A549 (cell line): ENCODE measurements at regions of chr4 and their contacts with region 1.

Region 1: DNA sequence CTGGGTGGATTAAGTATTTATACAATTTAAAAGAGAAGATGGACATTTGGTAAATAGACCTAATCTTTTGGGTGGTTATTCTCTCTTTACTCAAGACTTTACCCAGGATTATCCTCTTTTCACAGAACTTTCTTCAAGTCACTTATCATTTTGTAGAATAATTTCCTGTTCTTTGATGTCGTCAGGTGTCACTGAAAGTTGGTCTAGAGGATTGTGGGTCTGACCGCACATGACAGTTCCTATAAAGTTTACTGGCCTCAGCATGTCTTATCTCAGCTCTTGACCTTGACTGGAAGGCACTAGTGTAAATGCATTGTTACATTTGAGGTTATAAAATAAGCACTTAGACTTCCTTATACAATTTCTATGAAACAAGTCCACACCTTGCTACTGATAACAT is 139.9 kb upstream of the SLC4A4 start:
- DNase-seq: no peak
- ATAC-seq: no peak
- H3K4me3 ChIP-seq: no peak overlapping the region
- H3K27ac ChIP-seq: no peak overlapping the region
- H3K4me1 ChIP-seq: no peaks in the 10 kb centered on the region
- CTCF ChIP-seq: no peak
- EP300 ChIP-seq: no peak
- POLR2A ChIP-seq: no peak
- RAD21 ChIP-seq: no peak

Region 2: DNA sequence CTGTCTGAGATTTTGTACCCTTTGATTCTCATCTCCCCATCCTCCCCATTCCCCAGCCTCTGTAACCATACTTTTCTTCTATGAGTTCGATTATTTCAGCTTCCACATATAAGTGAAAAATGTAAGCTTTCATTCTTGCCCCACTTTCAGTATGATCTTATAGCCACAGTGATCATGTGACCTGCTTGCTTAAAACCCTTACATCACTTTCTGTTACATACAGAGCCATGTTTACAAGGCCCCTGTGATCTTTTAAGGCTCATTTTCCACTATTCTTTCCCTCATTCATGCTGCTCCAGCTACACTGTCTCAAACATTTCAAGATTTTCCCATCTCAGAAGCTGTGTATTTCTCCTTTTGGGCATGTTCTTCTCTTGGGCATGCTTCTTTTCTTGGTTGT is 57.8 kb before region 1 on chr4:
- CTCF ChIA-PET with region 1: no interaction called
- POLR2A ChIA-PET with region 1: no interaction called
- DNase-seq: no peak
- ATAC-seq: no peak
- H3K4me3 ChIP-seq: no peak overlapping the region
- H3K27ac ChIP-seq: no peak overlapping the region
- H3K4me1 ChIP-seq: no peaks in the 10 kb centered on the region
- CTCF ChIP-seq: no peak
- EP300 ChIP-seq: no peak
- POLR2A ChIP-seq: no peak
- RAD21 ChIP-seq: no peak

Region 3: DNA sequence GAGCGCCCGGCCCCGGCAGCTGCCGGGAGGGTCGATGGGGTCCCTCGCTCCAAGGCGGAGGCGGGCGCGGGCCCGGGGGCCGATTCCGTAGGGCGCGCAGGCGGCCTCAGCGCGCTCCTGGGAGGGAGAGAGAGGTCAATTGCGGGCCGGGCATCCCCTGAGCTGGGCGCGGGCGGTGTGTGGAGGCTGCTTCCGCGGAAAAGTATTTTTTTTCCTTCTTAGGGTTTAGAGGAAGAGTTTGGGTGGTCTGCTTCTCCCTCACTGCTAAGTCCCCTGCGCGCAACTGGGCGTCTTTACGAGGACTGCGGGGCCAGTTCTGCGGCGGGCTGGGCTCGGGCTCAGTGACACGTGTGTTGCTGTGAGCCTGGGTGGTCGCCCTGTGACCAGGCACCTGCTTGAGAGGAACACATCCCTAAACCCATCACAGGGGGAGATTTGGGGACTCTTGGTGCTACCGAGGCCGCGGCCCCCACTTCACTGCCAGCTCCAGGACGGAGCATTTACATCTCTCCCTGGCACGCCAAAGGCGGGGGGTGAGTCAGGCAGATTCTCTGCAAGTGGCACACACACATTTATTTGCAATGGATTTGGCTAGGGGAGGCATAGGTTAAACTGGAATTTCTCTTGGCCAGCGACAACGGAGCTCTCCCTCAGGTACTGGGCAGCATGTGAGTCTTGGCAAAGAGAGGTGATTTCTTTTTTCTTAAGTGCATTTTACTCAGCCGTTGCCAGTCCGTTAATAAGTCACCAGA is 11.4 kb before region 1 on chr4:
- CTCF ChIA-PET with region 1: interaction called, 14 read pairs
- POLR2A ChIA-PET with region 1: no interaction called
- DNase-seq: peak; percentile 23 to 58
- ATAC-seq: peak; percentile 65 to 69
- H3K4me3 ChIP-seq: peak overlapping the region; percentile 89
- H3K27ac ChIP-seq: peak overlapping the region; percentile 79 to 91
- H3K4me1 ChIP-seq: peaks cover 9% of the 10 kb centered on the region; the same call in 1 of the 3 replicates
- CTCF ChIP-seq: no peak
- EP300 ChIP-seq: no peak
- POLR2A ChIP-seq: no peak
- RAD21 ChIP-seq: no peak